Posterior cingulate gyrus (tissue), 11 donors: ENCODE measurements at regions of chr7 and their contacts with region 1.

Region 1: DNA sequence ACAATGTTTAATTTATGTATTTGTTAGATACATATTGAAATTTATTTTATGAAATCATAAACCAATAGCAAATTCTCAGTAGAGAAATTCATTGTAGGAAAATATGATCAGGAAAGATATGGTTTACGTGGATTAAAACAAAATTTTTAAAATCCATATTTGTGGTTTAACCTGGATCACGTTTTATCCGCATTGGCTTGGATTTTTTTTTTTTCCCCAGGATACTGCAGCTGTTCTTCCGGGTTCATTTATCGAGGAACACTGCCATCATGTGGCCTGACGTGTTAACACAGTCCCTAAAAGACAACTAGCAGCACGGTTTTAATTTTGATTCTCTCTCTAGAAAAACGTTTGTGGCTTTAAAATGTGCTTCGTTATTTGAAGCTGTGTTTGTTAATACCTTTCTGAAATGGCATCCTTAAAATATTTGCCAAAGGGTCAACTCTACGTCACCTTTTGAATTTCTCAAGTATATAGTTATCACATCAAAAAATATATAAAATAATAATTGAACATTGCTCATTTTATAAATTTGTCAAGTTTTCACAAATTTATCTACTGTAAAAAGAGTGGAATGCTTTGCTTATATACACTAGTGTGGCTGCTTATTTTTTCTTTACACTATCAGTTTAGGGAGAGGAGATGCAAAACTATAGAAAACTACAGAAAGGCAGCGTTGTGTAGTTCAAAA is 8.7 kb upstream of the ASB4 start:
- DNase-seq: peak in 8 of 10 donors; percentile 16 to 86 (median 69)

Region 2: GRCh38 chr7:95246831-95247370 is 230.1 kb before region 1 on chr7:
- intact Hi-C with region 1: loop called (anchors 10 kb)
- DNase-seq: peak in 7 of 10 donors; percentile 17 to 90 (median 57)

Region 3: DNA sequence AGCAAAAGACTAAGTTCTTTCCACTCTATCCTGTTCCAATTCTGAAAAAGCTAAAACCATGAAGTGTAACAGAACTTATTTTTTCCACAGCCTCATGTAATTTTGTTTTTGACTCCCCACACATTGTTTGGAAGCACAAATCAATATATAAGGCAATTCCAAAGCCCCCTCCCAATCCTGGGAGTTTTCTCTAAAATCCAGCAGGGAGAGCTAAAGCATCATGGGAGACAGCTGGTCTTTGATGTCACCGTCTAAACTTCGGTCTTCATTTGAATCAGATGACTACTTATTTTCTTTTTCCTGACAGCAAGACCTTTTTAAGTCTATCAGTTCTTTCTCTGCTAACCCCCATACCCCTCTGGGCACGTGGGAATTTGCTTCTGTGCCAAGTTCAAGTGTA is 119.4 kb before region 1 on chr7:
- intact Hi-C with region 1: loop called (anchors 1 kb)
- DNase-seq: no peak